SK-N-SH (cell line): ENCODE measurements at regions of chr17 and their contacts with region 1.

Region 1: GRCh38 chr17:32877164-32877764 is 340 bp upstream of the MYO1D start:
- DNase-seq: peak; percentile 98
- H3K4me3 ChIP-seq: peak overlapping the region; percentile 76 to 95
- H3K27ac ChIP-seq: peak overlapping the region in 1 of 2 experiments; percentile 44; a peak in 3 of 4 replicates
- H3K4me1 ChIP-seq: peaks cover 0 to 8% of the 10 kb centered on the region in 2 experiments; a peak in 2 of 4 replicates
- H3K27me3 ChIP-seq: no peaks in the 10 kb centered on the region
- CTCF ChIP-seq: peak; percentile 76
- EP300 ChIP-seq: no peak
- RAD21 ChIP-seq: peak; percentile 71

Region 2: DNA sequence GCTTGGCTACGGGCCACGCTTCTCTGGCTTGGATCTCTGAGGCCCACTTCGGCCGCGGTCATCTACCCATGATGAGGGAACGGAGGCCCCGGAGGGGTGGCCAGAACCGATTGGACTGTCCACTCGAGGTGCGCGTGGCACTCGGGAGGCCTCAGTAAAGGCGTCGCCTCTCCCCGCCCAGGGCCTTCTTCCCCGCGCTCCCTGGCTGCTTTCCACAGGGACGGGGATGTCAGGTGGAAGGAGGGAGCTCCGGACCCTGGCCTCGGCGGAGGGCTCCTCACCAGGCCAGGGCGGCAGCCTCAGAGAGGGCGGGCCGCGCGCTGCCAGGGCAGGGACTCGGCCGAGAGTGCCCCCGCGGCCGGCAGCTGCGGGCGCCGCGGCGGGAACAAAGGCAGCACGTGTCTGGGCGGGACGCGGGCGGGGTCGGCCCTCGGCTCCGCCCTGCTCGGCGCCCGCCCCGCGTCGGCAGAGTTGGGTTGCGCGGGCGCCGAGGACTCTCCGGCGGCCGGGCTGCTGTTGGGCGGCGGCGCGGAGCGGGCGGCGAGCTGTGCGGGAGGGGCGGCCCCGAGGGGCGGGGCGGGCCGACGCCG is 391.1 kb before region 1 on chr17:
- CTCF ChIA-PET with region 1: interaction called, 13 read pairs
- POLR2A ChIA-PET with region 1: interaction called, 3 read pairs
- DNase-seq: peak; percentile 96
- H3K4me3 ChIP-seq: peak overlapping the region in 1 of 2 experiments; percentile 76; a peak in 3 of 4 replicates
- H3K27ac ChIP-seq: peak overlapping the region in 1 of 2 experiments; percentile 88; a peak in 2 of 4 replicates
- H3K4me1 ChIP-seq: peaks cover 0 to 51% of the 10 kb centered on the region in 2 experiments; a peak in 2 of 4 replicates
- H3K27me3 ChIP-seq: no peaks in the 10 kb centered on the region
- CTCF ChIP-seq: no peak
- EP300 ChIP-seq: no peak
- RAD21 ChIP-seq: no peak

Region 3: DNA sequence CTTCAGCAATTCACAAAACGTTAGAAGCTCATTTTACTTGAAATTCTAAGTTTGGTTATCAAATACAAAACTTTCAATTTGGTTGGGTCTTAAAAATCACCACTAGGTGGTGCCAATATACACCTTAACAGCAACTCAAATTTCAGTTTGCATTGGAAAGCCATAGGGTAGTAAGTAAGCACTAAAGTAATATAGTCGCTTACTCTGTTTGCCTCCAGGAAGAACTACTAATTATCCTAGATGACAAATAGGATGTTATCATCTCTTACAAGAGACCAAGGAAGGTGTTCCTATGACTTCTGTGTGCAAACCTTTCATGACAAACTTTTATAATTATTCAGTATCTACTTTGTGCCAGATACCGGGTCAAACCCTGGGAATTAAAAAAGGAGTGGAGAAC is 93.7 kb before region 1 on chr17:
- CTCF ChIA-PET with region 1: interaction called, 162 read pairs
- POLR2A ChIA-PET with region 1: no interaction called
- DNase-seq: peak; percentile 49
- H3K4me3 ChIP-seq: no peak overlapping the region
- H3K27ac ChIP-seq: no peak overlapping the region
- H3K4me1 ChIP-seq: no peaks in the 10 kb centered on the region; a peak in 1 of 4 replicates
- H3K27me3 ChIP-seq: no peaks in the 10 kb centered on the region
- CTCF ChIP-seq: peak; percentile 86
- EP300 ChIP-seq: no peak
- RAD21 ChIP-seq: peak; percentile 93

Region 4: GRCh38 chr17:32828822-32829221 is 48.4 kb before region 1 on chr17:
- CTCF ChIA-PET with region 1: interaction called, 38 read pairs
- POLR2A ChIA-PET with region 1: no interaction called
- DNase-seq: no peak
- H3K4me3 ChIP-seq: no peak overlapping the region
- H3K27ac ChIP-seq: peak overlapping the region; percentile 24 to 89; a peak in 3 of 4 replicates
- H3K4me1 ChIP-seq: peaks cover 0 to 14% of the 10 kb centered on the region in 2 experiments; a peak in 3 of 4 replicates
- H3K27me3 ChIP-seq: no peaks in the 10 kb centered on the region
- CTCF ChIP-seq: no peak
- EP300 ChIP-seq: no peak
- RAD21 ChIP-seq: no peak

Region 5: GRCh38 chr17:32859857-32860525 is 17.3 kb before region 1 on chr17:
- CTCF ChIA-PET with region 1: interaction called, 70 read pairs
- POLR2A ChIA-PET with region 1: no interaction called
- DNase-seq: no peak
- H3K4me3 ChIP-seq: no peak overlapping the region
- H3K27ac ChIP-seq: no peak overlapping the region
- H3K4me1 ChIP-seq: no peaks in the 10 kb centered on the region; a peak in 2 of 4 replicates
- H3K27me3 ChIP-seq: no peaks in the 10 kb centered on the region
- CTCF ChIP-seq: no peak
- EP300 ChIP-seq: no peak
- RAD21 ChIP-seq: no peak

Region 6: GRCh38 chr17:32936894-32937500 is 59.7 kb after region 1 on chr17:
- CTCF ChIA-PET with region 1: interaction called, 18 read pairs
- POLR2A ChIA-PET with region 1: no interaction called
- DNase-seq: peak; percentile 80
- H3K4me3 ChIP-seq: peak overlapping the region in 1 of 2 experiments; percentile 40; a peak in 1 of 4 replicates
- H3K27ac ChIP-seq: no peak overlapping the region; a peak in 1 of 4 replicates
- H3K4me1 ChIP-seq: no peaks in the 10 kb centered on the region; a peak in 1 of 4 replicates
- H3K27me3 ChIP-seq: no peaks in the 10 kb centered on the region
- CTCF ChIP-seq: peak; percentile 74
- EP300 ChIP-seq: no peak
- RAD21 ChIP-seq: peak; percentile 56